ENCODE measurements at regions of chr17 and their contacts with region 1.

Region 1: GRCh38 chr17:7844292-7845154 is 10.3 kb upstream of the TMEM88 start:
- DNase-seq: peak; percentile 89 to 92
- ATAC-seq: peak; percentile 33 to 60 (median 41)
- H3K4me3 ChIP-seq: peak overlapping the region; percentile 96
- H3K4me3 Mint-ChIP-seq: peak overlapping the region; percentile 100
- H3K27ac ChIP-seq: peak overlapping the region; percentile 100
- H3K27ac Mint-ChIP-seq: peak overlapping the region; percentile 100
- H3K4me1 ChIP-seq: peaks cover 46% of the 10 kb centered on the region
- H3K4me1 Mint-ChIP-seq: peaks cover 39 to 70% of the 10 kb centered on the region in 2 donors
- H3K27me3 ChIP-seq: no peaks in the 10 kb centered on the region
- H3K27me3 Mint-ChIP-seq: peaks cover 0 to 2% of the 10 kb centered on the region in 2 donors
- CTCF ChIP-seq: no peak

Region 2: DNA sequence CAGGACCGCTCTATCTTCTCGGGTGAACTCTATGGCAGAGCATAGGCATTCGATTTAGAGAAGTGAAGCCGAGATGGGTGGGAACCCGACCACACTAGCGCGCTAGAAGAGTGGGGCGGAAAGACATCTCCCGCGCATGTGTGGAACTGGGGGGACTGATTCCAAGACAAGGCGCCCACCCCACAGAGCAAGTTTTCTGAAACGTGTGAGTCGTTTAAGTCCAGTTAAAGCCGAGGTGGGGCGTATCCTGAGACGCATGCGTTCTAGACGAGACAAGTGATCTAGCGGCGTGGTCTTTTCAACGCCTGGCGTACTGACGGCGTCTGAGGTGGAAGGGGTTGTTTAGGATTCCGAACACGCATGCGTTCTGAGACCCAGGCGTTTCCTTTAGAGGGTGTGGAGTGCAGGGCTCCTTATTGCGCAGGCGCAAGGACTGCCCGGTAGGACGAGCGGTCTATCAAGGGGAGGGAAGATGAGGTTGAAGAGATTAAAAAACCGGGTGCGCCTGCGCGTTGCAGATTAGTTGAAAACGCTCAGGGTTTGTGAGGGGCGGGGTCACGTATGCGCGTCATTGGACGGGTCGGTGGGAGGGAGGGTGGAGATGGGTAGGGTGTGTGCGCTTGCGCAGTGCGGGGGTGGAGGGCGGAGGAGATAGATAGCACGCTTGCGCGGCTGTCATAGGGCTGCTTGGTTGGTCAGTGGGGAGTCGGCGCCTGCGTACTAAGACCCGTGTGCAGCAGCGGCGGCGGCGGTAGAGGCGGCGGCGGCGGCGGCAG is 537.4 kb before region 1 on chr17 and contains the start of gene EIF5A:
- intact Hi-C with region 1: loop called (anchors 5 kb)
- DNase-seq: peak; percentile 98 to 100
- ATAC-seq: peak; percentile 67 to 86 (median 73)
- H3K4me3 ChIP-seq: peak within 1 kb of the TSS; percentile 88
- H3K4me3 Mint-ChIP-seq: peak within 1 kb of the TSS; percentile 95
- H3K27ac ChIP-seq: peak within 1 kb of the TSS; percentile 99
- H3K27ac Mint-ChIP-seq: peak within 1 kb of the TSS; percentile 91 to 99
- H3K4me1 ChIP-seq: peaks cover 39% of the 10 kb centered on the region
- H3K4me1 Mint-ChIP-seq: peaks cover 40 to 48% of the 10 kb centered on the region in 2 donors
- H3K27me3 ChIP-seq: no peaks in the 10 kb centered on the region
- H3K27me3 Mint-ChIP-seq: no peaks in the 10 kb centered on the region
- CTCF ChIP-seq: no peak
- total RNA-seq, gene EIF5A: 483 to 608 (median 492) TPM

Region 3: DNA sequence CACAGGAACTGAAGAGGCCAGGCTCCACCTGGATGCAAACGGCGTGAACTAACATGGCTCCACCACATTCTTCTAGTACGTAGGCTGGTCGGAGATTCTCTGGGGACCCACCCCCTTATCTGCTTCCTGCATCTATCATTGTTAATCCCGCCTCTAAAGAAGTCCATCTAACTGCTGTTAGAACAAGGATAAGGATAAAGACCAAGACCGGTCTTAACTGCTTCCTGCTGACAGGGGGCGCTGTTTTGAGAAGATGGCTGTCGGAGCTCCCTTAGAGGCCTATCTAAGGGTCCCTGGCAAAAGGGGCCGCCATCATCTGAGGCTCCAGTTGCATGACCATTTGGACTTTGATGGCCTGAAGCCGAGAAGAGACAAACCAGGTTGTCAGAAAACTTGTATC is 321.5 kb before region 1 on chr17:
- intact Hi-C with region 1: no loop called
- DNase-seq: peak in 1 of 2 donors; percentile 78
- ATAC-seq: peak in 2 of 3 donors; percentile 56 to 65
- H3K4me3 ChIP-seq: no peak overlapping the region
- H3K4me3 Mint-ChIP-seq: no peak overlapping the region
- H3K27ac ChIP-seq: no peak overlapping the region
- H3K27ac Mint-ChIP-seq: no peak overlapping the region
- H3K4me1 ChIP-seq: no peaks in the 10 kb centered on the region
- H3K4me1 Mint-ChIP-seq: peaks cover 0 to 6% of the 10 kb centered on the region in 2 donors
- H3K27me3 ChIP-seq: no peaks in the 10 kb centered on the region
- H3K27me3 Mint-ChIP-seq: no peaks in the 10 kb centered on the region
- CTCF ChIP-seq: peak; percentile 56

Region 4: GRCh38 chr17:7572588-7573323 is 271.8 kb before region 1 on chr17:
- intact Hi-C with region 1: loop called (anchors 5 kb)
- DNase-seq: peak; percentile 99 to 100
- ATAC-seq: peak; percentile 79 to 93 (median 80)
- H3K4me3 ChIP-seq: peak overlapping the region; percentile 93
- H3K4me3 Mint-ChIP-seq: peak overlapping the region; percentile 99
- H3K27ac ChIP-seq: peak overlapping the region; percentile 96
- H3K27ac Mint-ChIP-seq: peak overlapping the region; percentile 98 to 100
- H3K4me1 ChIP-seq: peaks cover 30% of the 10 kb centered on the region
- H3K4me1 Mint-ChIP-seq: peaks cover 43 to 47% of the 10 kb centered on the region in 2 donors
- H3K27me3 ChIP-seq: no peaks in the 10 kb centered on the region
- H3K27me3 Mint-ChIP-seq: no peaks in the 10 kb centered on the region
- CTCF ChIP-seq: no peak

Region 5: DNA sequence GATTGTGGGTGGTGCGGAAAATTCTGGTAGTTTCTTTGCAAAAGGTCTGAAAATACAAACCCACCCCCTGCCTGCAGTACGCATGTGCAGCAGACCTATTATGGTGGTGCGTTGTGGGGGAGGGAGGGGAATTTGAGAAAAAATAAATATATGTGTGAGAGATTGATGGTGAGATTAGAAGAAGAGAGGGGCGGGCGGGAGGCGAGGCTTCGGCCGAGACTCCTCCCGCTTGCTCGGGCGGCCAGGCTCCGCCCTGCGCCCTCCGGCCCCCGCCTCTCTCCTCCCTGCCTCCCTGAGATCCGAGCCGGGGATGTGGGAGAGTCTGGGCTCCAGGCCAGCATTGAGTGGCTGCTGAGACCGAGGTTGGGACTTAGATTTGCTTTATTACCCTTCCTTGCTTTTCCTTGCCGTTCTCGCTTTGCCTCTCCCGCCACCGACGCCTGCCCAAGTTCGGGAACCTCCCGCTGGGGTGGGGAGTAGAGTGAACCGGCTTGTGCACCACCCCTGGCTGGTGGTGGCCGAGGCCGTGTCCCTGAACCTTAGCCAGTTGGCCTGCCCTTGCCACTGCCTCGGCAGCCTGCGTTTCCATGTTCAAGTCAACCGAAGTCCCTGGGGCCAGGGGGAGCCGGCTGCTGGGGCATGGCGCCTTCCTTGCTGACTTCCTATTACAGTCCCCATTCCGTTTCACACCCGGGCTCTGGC is 43.1 kb after region 1 on chr17:
- intact Hi-C with region 1: loop called (anchors 2 kb)
- DNase-seq: peak; percentile 75 to 96
- ATAC-seq: peak; percentile 71 to 86 (median 76)
- H3K4me3 ChIP-seq: peak overlapping the region; percentile 71
- H3K4me3 Mint-ChIP-seq: no peak overlapping the region
- H3K27ac ChIP-seq: peak overlapping the region; percentile 68
- H3K27ac Mint-ChIP-seq: no peak overlapping the region
- H3K4me1 ChIP-seq: peaks cover 43% of the 10 kb centered on the region
- H3K4me1 Mint-ChIP-seq: no peaks in the 10 kb centered on the region
- H3K27me3 ChIP-seq: no peaks in the 10 kb centered on the region
- H3K27me3 Mint-ChIP-seq: no peaks in the 10 kb centered on the region
- CTCF ChIP-seq: no peak

Region 6: DNA sequence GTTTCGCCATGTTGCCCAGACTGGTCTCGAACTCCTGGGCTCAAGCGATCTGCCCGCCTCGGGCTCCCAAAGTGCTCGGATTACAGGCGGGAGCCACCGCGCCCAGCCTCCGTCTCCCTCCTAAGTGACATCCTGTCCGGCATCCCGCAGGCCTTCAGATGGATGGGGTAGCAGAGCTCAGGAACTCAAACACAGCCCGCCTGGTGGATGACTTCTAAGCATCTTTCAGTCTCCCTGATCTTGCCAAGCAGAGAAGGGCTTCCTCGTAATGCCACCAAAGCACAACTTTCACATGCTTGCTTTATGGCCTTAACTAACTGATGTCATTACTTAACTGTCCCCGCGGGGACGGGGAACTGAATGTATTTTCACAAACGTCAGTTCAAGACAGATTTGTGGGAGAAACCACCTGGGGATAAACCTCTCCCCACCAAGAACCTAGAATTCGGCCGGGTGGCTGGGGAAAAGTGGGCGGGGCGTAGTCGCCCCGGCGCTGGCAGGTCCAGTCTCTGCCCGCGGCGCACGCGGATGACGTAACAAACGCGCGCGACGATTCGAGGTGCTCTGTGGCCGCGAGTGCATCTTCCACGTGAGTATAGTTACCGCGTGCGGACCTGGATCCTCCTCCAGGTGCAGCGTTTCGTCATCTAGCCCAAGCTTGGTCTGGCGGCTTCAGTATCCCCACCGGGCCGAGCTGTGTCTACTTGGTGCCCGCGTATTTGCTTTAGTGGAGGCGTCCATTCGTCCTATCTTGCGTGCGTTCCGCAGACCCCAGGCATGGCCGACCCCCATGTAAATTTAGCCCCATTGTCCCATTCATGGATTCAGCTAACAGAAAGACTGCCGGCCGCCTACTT is 404.5 kb after region 1 on chr17 and contains the start of gene PFAS:
- intact Hi-C with region 1: loop called (anchors 10 kb)
- DNase-seq: peak; percentile 98 to 99
- ATAC-seq: peak; percentile 51 to 71 (median 63)
- H3K4me3 ChIP-seq: peak within 1 kb of the TSS; percentile 74
- H3K4me3 Mint-ChIP-seq: peak within 1 kb of the TSS; percentile 94
- H3K27ac ChIP-seq: peak within 1 kb of the TSS; percentile 99
- H3K27ac Mint-ChIP-seq: peak within 1 kb of the TSS; percentile 92 to 97
- H3K4me1 ChIP-seq: peaks cover 37% of the 10 kb centered on the region
- H3K4me1 Mint-ChIP-seq: peaks cover 33 to 51% of the 10 kb centered on the region in 2 donors
- H3K27me3 ChIP-seq: no peaks in the 10 kb centered on the region
- H3K27me3 Mint-ChIP-seq: no peaks in the 10 kb centered on the region
- CTCF ChIP-seq: no peak
- total RNA-seq, gene PFAS: 23.6 to 30.0 (median 24.0) TPM

Measured in natural killer cell (primary cell).